ENCODE measurements at regions of chr13 and their contacts with region 1.

Region 1: GRCh38 chr13:102845630-102846260 is at the start of gene ERCC5:
- DNase-seq: peak; percentile 94 to 97 (median 95)
- ATAC-seq: peak; percentile 90 to 96 (median 94)
- H3K4me3 ChIP-seq: peak within 1 kb of the TSS; percentile 67 to 96 (median 92)
- H3K27ac ChIP-seq: peak within 1 kb of the TSS; percentile 92 to 99 (median 96)
- H3K4me1 ChIP-seq: peaks cover 0 to 31% (median 19%) of the 10 kb centered on the region in 12 donors
- H3K27me3 ChIP-seq: no peaks in the 10 kb centered on the region
- CTCF ChIP-seq: peak in 2 of 12 donors; percentile 7 to 10
- POLR2A ChIP-seq: peak in 1 of 2 donors; percentile 78
- total RNA-seq, gene ERCC5: 27.4 to 61.7 (median 31.4) TPM

Region 2: DNA sequence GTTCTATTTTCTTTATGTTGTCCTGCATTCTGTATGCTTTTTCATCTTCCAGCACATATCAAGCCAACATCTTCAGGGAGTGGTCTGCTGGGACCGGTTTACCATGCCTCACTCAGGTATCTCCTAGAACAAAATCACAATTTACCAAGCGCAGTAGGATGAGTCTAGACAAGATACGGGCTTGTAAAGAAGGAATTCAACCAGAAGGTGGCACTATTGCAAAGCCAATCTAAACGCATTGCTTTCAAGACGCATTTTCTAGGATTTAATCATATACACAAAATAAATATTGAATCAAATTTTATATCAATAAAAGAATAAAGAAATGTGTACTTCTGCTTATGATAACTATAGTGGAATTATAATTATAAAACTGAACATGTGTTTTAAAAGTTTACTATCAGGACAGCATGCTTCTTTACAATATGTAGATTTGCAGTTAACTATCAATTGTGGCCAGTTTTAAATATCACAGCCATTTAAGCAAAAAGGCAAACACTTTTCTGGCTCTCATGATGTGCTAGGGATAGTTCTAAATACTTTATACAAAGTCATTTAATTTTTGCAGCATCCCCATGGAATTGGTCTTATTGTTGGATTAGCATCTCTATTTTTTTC is 265.1 kb before region 1 on chr13:
- intact Hi-C with region 1: loop called in 8 of 10 experiments (anchors 1 to 5 kb)
- DNase-seq: no peak
- ATAC-seq: peak in 3 of 4 donors; percentile 48 to 67 (median 66)
- H3K4me3 ChIP-seq: no peak overlapping the region
- H3K27ac ChIP-seq: no peak overlapping the region
- H3K4me1 ChIP-seq: no peaks in the 10 kb centered on the region
- H3K27me3 ChIP-seq: peaks cover 0 to 10% (median 0%) of the 10 kb centered on the region in 9 donors
- CTCF ChIP-seq: peak; percentile 58 to 85 (median 76)
- POLR2A ChIP-seq: no peak

Region 3: GRCh38 chr13:102596147-102597028 is 249.4 kb before region 1 on chr13 and contains the start of gene TPP2:
- intact Hi-C with region 1: loop called in 8 of 10 experiments (anchors 1 to 5 kb)
- DNase-seq: peak; percentile 99 to 100 (median 100)
- ATAC-seq: peak; percentile 98 to 99 (median 99)
- H3K4me3 ChIP-seq: peak within 1 kb of the TSS; percentile 64 to 97 (median 86)
- H3K27ac ChIP-seq: peak within 1 kb of the TSS; percentile 95 to 100 (median 98)
- H3K4me1 ChIP-seq: peaks cover 0 to 71% (median 38%) of the 10 kb centered on the region in 12 donors
- H3K27me3 ChIP-seq: no peaks in the 10 kb centered on the region
- CTCF ChIP-seq: no peak
- POLR2A ChIP-seq: peak; percentile 47 to 84
- total RNA-seq, gene TPP2: 26.0 to 37.9 (median 32.4) TPM

Region 4: DNA sequence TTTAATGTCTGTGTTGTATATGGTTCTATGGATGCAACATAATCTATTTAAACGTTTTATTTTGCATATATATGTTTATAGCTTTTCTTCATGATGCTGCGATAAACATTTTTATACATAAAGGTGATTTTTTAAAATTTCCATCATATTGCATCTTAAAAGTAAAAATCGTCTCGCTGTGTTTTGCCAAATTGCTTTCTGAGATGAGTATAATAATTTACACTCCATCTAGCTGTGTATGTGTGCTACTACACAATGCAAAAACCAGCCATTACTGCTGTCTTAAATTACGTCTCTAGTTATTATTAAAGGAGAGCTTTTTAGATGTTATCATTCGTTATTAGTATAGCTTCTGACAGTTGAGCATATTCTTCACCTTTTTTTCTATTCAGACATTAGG is 188.1 kb before region 1 on chr13:
- intact Hi-C with region 1: loop called in 1 of 10 experiments (anchors 10 kb)
- DNase-seq: no peak
- ATAC-seq: no peak
- H3K4me3 ChIP-seq: no peak overlapping the region
- H3K27ac ChIP-seq: no peak overlapping the region
- H3K4me1 ChIP-seq: peaks cover 0 to 2% (median 0%) of the 10 kb centered on the region in 12 donors
- H3K27me3 ChIP-seq: no peaks in the 10 kb centered on the region
- CTCF ChIP-seq: peak in 5 of 12 donors; percentile 10 to 36 (median 24)
- POLR2A ChIP-seq: no peak

Region 5: DNA sequence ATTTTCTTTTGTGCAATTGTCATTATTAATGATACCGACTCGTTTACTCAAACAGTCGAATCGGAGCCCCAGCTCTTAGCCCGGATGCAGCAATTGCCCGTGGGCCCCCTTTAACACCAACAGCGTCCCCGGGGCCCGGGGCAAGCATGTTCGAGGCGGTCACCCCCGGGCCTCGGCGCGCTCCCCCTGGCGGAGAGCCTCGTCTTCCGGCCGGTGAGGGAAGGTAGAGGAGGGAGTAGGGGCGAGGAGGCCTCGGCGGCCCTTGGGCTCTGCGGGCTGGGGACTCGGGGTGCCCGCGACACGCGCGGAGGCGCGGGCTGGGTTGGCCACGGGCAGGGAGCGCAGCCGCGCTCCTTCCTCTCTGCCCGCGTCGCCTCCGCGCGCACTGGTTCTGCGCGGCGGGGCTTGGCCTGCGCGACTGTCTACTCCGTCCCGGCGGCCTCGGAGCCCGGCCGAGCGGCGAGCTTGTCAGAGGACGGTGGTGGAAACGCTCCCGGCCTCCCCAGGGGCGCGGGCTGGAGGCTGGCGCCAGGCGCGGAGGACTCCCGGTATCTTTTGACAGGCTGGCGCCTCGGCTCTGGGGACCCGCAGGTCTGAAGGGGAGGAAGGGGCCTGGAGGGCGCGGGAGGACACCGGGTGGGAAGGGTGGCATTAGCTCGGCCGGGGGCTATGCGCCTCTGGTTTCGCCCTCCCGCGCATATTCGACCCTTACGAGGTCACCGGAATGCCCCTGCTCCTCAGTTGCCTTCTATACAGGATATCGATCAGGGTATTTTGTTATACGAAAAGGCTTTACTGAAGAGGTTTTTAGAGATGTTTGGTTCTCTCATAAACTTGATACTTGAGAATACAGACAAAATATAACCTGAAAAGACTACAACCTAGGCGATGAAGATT is 45.4 kb before region 1 on chr13:
- intact Hi-C with region 1: loop called in 5 of 10 experiments (anchors 1 to 5 kb)
- DNase-seq: peak; percentile 84 to 90 (median 87)
- ATAC-seq: peak; percentile 66 to 87 (median 82)
- H3K4me3 ChIP-seq: peak overlapping the region; percentile 65 to 95 (median 82)
- H3K27ac ChIP-seq: peak overlapping the region; percentile 72 to 96 (median 91)
- H3K4me1 ChIP-seq: peaks cover 0 to 47% (median 30%) of the 10 kb centered on the region in 12 donors
- H3K27me3 ChIP-seq: peaks cover 0 to 10% (median 0%) of the 10 kb centered on the region in 9 donors
- CTCF ChIP-seq: peak; percentile 70 to 89 (median 82)
- POLR2A ChIP-seq: peak in 1 of 2 donors; percentile 26

Measured in heart left ventricle (tissue), 16 donors.